ENCODE measurements at regions of chrX and their contacts with region 1.

Region 1: GRCh38 chrX:2781698-2782097 is 29.9 kb downstream of the XG start:
- DNase-seq: peak; percentile 35
- ATAC-seq: peak; percentile 82
- H3K4me3 ChIP-seq: peak overlapping the region; percentile 11; the same call in 1 of the 2 replicates
- H3K27ac ChIP-seq: no peak overlapping the region
- H3K4me1 ChIP-seq: peaks cover 5% of the 10 kb centered on the region; the same call in 1 of the 2 replicates
- H3K27me3 ChIP-seq: no peaks in the 10 kb centered on the region
- CTCF ChIP-seq: no peak
- EP300 ChIP-seq: no peak
- POLR2A ChIP-seq: no peak
- RAD21 ChIP-seq: no peak

Region 2: DNA sequence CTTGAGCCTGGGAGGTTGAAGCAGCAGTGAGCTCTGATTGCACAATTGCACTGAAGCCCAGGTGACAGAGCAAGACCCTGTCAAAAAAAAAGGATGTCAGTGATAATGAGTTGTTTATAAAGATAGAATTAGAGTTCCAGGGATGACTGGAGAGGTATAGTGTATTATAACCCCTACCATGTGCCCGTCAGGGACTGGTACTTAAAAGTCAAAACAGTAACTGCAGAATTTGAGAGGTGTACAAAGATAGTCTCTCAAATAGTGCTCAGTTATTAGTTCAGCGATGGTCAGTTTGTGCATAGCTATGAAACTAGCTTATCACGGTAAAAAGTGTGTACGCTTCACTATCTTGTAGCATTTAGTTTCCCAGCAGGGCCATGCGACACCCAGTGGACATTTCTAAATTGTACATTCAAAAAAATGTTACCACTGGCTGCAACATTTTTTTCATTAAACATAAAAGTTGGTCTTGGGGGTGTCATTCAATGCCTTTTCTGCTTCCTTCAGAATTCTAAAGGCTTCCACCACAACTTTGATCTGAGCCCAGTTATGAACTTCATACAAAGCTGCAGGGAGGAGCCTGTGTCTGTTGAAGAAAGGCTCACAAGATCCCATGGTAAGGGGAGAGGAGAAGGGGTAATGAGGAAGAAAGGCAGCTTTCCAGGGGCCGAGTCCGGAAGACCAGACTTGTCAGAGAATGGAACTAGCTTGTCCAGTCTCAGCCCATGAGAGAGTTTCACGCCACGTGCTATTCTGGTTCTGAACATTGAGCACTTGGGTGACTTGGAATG is 37.8 kb after region 1 on chrX:
- CTCF ChIA-PET with region 1: interaction called, 10 read pairs
- POLR2A ChIA-PET with region 1: no interaction called
- RAD21 ChIA-PET with region 1: no interaction called
- SMC1A ChIA-PET with region 1: interaction called, 5 read pairs
- in situ Hi-C with region 1: no loop called
- intact Hi-C with region 1: no loop called
- DNase-seq: no peak
- ATAC-seq: peak; percentile 56
- H3K4me3 ChIP-seq: no peak overlapping the region
- H3K27ac ChIP-seq: no peak overlapping the region
- H3K4me1 ChIP-seq: no peaks in the 10 kb centered on the region
- H3K27me3 ChIP-seq: no peaks in the 10 kb centered on the region; a peak in 1 of 4 replicates
- CTCF ChIP-seq: peak; percentile 22 to 41 (median 38); a peak in 4 of 6 replicates
- EP300 ChIP-seq: no peak
- POLR2A ChIP-seq: no peak
- RAD21 ChIP-seq: peak; percentile 59

Region 3: GRCh38 chrX:3076416-3076991 is 294.8 kb after region 1 on chrX:
- CTCF ChIA-PET with region 1: no interaction called
- POLR2A ChIA-PET with region 1: no interaction called
- RAD21 ChIA-PET with region 1: no interaction called
- SMC1A ChIA-PET with region 1: no interaction called
- in situ Hi-C with region 1: no loop called
- intact Hi-C with region 1: no loop called
- DNase-seq: no peak
- ATAC-seq: no peak
- H3K4me3 ChIP-seq: no peak overlapping the region
- H3K27ac ChIP-seq: no peak overlapping the region
- H3K4me1 ChIP-seq: no peaks in the 10 kb centered on the region
- H3K27me3 ChIP-seq: no peaks in the 10 kb centered on the region
- CTCF ChIP-seq: no peak
- EP300 ChIP-seq: no peak
- POLR2A ChIP-seq: no peak
- RAD21 ChIP-seq: no peak